CD4-positive, alpha-beta T cell (primary cell): ENCODE measurements at regions of chr9 and their contacts with region 1.

Region 1: DNA sequence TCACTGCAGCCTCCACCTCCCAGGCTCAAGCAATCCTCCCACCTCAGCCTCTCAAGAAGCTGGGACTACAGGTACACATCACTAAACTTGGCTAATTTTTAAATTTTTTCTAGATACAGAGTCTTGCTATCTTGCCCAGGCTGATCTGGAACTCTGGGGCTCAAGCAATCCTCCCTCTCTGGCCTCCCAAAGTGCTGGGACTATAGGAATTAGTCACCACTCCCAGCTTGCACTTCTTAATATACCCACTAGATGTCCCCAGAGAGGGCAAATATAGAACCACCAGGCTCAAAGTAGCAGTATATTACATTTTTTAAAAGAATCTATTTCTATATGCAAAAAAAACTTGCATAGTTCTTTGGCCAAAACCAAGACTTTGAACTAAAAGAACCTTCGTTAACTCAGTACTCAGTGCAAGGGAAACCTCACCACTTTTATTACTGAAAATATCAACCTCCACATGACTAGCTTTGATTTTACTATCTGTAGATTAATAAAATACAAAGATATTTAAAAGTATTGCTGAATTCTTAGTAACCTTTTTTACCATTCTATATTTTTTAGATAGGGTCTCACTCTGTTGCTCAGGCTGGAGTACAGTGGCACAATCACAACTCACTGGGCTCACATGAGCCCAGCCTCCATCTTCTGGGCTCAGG is 25.8 kb upstream of the HSD17B3 start:
- DNase-seq: peak in 12 of 14 experiments; percentile 5 to 75 (median 17)
- ATAC-seq: peak; percentile 76
- H3K4me3 ChIP-seq: no peak overlapping the region
- H3K4me3 Mint-ChIP-seq: no peak overlapping the region
- H3K27ac ChIP-seq: no peak overlapping the region
- H3K27ac Mint-ChIP-seq: no peak overlapping the region
- H3K4me1 ChIP-seq: no peaks in the 10 kb centered on the region
- H3K4me1 Mint-ChIP-seq: no peaks in the 10 kb centered on the region
- H3K27me3 ChIP-seq: no peaks in the 10 kb centered on the region
- H3K27me3 Mint-ChIP-seq: no peaks in the 10 kb centered on the region
- CTCF ChIP-seq: peak; percentile 89

Region 2: GRCh38 chr9:96122751-96123150 is 205.1 kb before region 1 on chr9:
- CTCF ChIA-PET with region 1: no interaction called
- POLR2A ChIA-PET with region 1: no interaction called
- intact Hi-C with region 1: no loop called
- DNase-seq: no peak
- ATAC-seq: no peak
- H3K4me3 ChIP-seq: no peak overlapping the region
- H3K4me3 Mint-ChIP-seq: no peak overlapping the region
- H3K27ac ChIP-seq: no peak overlapping the region
- H3K27ac Mint-ChIP-seq: no peak overlapping the region
- H3K4me1 ChIP-seq: no peaks in the 10 kb centered on the region
- H3K4me1 Mint-ChIP-seq: no peaks in the 10 kb centered on the region
- H3K27me3 ChIP-seq: peaks cover 0 to 2% of the 10 kb centered on the region in 2 experiments
- H3K27me3 Mint-ChIP-seq: peaks cover 12% of the 10 kb centered on the region
- CTCF ChIP-seq: no peak

Region 3: DNA sequence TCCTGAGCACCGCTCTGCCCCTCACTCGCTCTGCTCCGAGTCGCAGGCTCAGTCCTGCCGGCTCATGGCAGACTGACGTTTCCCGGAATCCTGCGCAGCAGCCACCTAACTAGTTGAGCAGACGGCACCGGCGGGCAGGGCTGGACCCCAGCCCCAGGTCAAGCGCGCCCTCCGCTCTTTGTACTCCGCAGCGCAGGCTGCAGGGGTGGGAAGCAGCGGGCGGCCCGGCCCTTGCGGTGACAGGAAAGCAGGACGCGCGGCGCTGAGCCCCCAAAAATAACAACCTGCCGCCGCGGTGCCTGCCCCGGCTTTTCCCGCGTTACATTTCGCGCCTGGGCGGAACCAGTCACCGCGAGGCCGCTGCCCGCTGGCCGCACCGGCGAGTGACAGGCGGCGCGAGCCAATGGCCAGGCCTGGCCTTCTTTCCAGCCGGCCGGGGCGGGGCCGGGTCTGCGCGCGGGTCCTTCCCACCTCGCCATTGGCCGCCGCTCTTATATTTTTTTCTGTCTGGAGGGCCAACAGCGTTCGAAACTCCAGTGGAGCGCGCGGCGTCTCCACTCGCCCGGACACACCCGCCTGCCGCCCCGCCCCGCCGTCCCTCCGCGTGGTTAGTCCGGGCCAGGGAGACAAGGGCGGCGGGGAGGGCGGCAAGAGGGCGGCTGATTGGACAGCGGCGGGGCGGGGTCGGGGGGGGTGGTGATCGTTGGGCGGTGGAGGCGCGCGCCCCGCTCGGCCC is 90.4 kb after region 1 on chr9 and contains the start of gene ZNF367:
- CTCF ChIA-PET with region 1: interaction called, 4 read pairs
- POLR2A ChIA-PET with region 1: interaction called, 3 read pairs
- intact Hi-C with region 1: loop called (anchors 2 to 5 kb)
- DNase-seq: peak; percentile 76 to 95 (median 90)
- ATAC-seq: peak; percentile 65
- H3K4me3 ChIP-seq: peak within 1 kb of the TSS; percentile 97
- H3K4me3 Mint-ChIP-seq: peak within 1 kb of the TSS; percentile 93
- H3K27ac ChIP-seq: peak within 1 kb of the TSS; percentile 93 to 94
- H3K27ac Mint-ChIP-seq: peak within 1 kb of the TSS; percentile 93
- H3K4me1 ChIP-seq: peaks cover 39% of the 10 kb centered on the region
- H3K4me1 Mint-ChIP-seq: peaks cover 36% of the 10 kb centered on the region
- H3K27me3 ChIP-seq: no peaks in the 10 kb centered on the region
- H3K27me3 Mint-ChIP-seq: no peaks in the 10 kb centered on the region
- CTCF ChIP-seq: no peak
- total RNA-seq, gene ZNF367: 6.5 to 6.7 TPM

Region 4: GRCh38 chr9:96478829-96479371 is 151.1 kb after region 1 on chr9:
- CTCF ChIA-PET with region 1: no interaction called
- POLR2A ChIA-PET with region 1: no interaction called
- intact Hi-C with region 1: loop called in 1 of 2 experiments (anchors 5 kb)
- DNase-seq: no peak
- ATAC-seq: no peak
- H3K4me3 ChIP-seq: no peak overlapping the region
- H3K4me3 Mint-ChIP-seq: no peak overlapping the region
- H3K27ac ChIP-seq: no peak overlapping the region
- H3K27ac Mint-ChIP-seq: no peak overlapping the region
- H3K4me1 ChIP-seq: no peaks in the 10 kb centered on the region
- H3K4me1 Mint-ChIP-seq: peaks cover 7% of the 10 kb centered on the region
- H3K27me3 ChIP-seq: no peaks in the 10 kb centered on the region
- H3K27me3 Mint-ChIP-seq: no peaks in the 10 kb centered on the region
- CTCF ChIP-seq: no peak

Region 5: GRCh38 chr9:96654443-96655197 is 326.8 kb after region 1 on chr9:
- CTCF ChIA-PET with region 1: interaction called, 4 read pairs
- POLR2A ChIA-PET with region 1: no interaction called
- intact Hi-C with region 1: loop called (anchors 1 to 2 kb)
- DNase-seq: peak; percentile 43 to 94 (median 72)
- ATAC-seq: peak; percentile 87
- H3K4me3 ChIP-seq: peak overlapping the region; percentile 58
- H3K4me3 Mint-ChIP-seq: peak overlapping the region; percentile 90
- H3K27ac ChIP-seq: peak overlapping the region; percentile 52 to 73
- H3K27ac Mint-ChIP-seq: peak overlapping the region; percentile 93
- H3K4me1 ChIP-seq: peaks cover 20% of the 10 kb centered on the region
- H3K4me1 Mint-ChIP-seq: peaks cover 32% of the 10 kb centered on the region
- H3K27me3 ChIP-seq: no peaks in the 10 kb centered on the region
- H3K27me3 Mint-ChIP-seq: no peaks in the 10 kb centered on the region
- CTCF ChIP-seq: no peak

Region 6: GRCh38 chr9:96777426-96777864 is 449.6 kb after region 1 on chr9:
- CTCF ChIA-PET with region 1: no interaction called
- POLR2A ChIA-PET with region 1: no interaction called
- intact Hi-C with region 1: no loop called
- DNase-seq: peak in 1 of 14 experiments; percentile 24
- ATAC-seq: peak; percentile 40
- H3K4me3 ChIP-seq: peak overlapping the region; percentile 78
- H3K4me3 Mint-ChIP-seq: peak overlapping the region; percentile 99
- H3K27ac ChIP-seq: peak overlapping the region; percentile 78 to 80
- H3K27ac Mint-ChIP-seq: peak overlapping the region; percentile 99
- H3K4me1 ChIP-seq: peaks cover 13% of the 10 kb centered on the region
- H3K4me1 Mint-ChIP-seq: peaks cover 57% of the 10 kb centered on the region
- H3K27me3 ChIP-seq: no peaks in the 10 kb centered on the region
- H3K27me3 Mint-ChIP-seq: no peaks in the 10 kb centered on the region
- CTCF ChIP-seq: no peak